HepG2 (cell line): ENCODE measurements at regions of chr15 and their contacts with region 1.

Region 1: DNA sequence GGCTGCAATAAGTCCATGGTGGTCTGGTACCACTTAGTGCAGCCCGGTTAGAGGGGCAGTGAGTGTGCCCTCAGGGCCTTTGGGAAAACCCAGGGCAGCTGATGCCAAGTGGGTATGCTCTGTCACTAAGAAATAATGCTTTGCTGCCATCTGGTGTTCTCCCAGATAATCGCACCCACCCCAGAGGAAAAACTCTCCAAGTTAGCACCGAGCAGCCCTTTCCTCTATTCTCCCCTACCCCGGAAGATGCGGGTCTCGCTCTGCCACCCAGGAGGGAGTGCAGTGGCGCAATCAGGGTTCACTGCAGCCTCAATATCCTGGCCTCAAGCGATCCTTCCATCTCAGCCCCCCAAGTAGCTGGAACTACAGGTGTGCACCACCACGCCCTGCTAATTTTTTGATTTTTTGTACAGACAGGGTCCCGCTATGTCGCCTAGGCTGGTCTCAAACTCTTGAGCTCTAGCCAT is 21.3 kb upstream of the DAPK2 start:
- DNase-seq: peak; percentile 60
- ATAC-seq: peak; percentile 89
- H3K4me3 ChIP-seq: no peak overlapping the region; a peak in 1 of 6 replicates
- H3K27ac ChIP-seq: no peak overlapping the region
- H3K4me1 ChIP-seq: peaks cover 44% of the 10 kb centered on the region
- H3K27me3 ChIP-seq: no peaks in the 10 kb centered on the region
- CTCF ChIP-seq: peak; percentile 88
- EP300 ChIP-seq: no peak
- POLR2A ChIP-seq: no peak
- RAD21 ChIP-seq: peak; percentile 89

Region 2: DNA sequence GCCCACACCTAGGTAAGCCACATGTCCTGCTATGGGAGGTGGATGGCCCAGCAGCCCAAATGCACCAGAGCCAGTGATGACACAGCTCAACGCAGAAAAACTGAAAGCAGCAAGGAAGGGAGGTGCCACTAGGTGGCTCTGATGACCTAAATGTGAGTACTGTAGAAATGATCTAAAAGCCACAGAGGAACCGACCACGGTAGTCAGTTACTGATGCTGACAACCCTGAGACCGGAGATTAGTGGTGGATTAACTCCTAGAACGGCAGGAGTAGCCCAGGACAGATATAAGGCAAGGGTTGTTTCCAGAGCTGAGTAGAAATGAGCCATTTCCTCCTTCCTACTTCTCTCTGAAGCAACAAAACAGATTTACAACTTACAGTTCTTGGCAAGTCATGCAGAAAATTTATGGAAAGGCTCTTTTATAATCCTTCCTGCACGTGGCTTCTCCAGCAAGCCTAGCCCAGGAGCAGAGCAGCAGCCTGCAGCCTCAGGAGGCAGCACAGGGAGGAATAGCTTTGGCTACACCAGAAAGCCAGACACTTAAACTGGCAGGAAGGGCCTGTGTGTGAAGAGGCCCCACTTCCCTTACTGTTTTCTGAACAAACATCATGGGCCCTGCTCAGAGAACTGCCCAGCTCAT is 457.3 kb before region 1 on chr15:
- CTCF ChIA-PET with region 1: interaction called, 4 read pairs
- POLR2A ChIA-PET with region 1: interaction called, 5 read pairs
- in situ Hi-C with region 1: loop called (anchors 5 kb)
- intact Hi-C with region 1: loop called (anchors 5 kb)
- DNase-seq: peak; percentile 77
- ATAC-seq: peak; percentile 94
- H3K4me3 ChIP-seq: no peak overlapping the region
- H3K27ac ChIP-seq: peak overlapping the region; percentile 27
- H3K4me1 ChIP-seq: peaks cover 21% of the 10 kb centered on the region
- H3K27me3 ChIP-seq: no peaks in the 10 kb centered on the region
- CTCF ChIP-seq: peak; percentile 90
- EP300 ChIP-seq: no peak
- POLR2A ChIP-seq: no peak
- RAD21 ChIP-seq: peak; percentile 60

Region 3: DNA sequence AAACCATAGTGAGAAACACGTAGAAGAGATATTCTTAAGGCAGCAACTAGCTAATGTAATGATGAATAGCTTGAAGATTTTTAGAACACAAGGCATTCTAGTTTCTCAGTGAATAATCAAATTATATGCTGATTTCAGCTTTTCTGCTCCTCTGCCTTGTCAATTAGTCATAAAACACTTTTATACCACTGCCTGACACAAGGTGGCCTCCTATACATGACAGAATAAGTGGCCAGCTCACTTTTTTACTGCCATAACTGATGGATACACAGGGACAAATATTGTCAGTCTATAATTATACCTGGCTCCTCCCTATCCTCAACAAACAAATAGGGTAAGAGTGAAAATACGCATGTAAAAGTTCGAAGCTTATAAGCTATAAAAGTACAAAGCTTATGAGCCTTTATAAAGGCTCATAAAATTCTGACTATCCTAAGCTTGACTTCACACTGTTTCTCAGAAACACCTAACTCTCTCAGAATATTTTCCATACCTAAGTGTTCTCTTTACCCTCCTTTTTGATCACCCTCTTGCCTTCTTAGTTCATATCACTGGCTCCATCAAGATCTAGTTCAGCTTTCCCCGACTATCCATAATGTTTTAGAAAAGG is 315.4 kb before region 1 on chr15:
- CTCF ChIA-PET with region 1: interaction called, 31 read pairs
- POLR2A ChIA-PET with region 1: interaction called, 3 read pairs
- in situ Hi-C with region 1: loop called (anchors 5 kb)
- intact Hi-C with region 1: loop called (anchors 1 kb)
- DNase-seq: peak; percentile 61
- ATAC-seq: peak; percentile 69
- H3K4me3 ChIP-seq: no peak overlapping the region
- H3K27ac ChIP-seq: no peak overlapping the region
- H3K4me1 ChIP-seq: no peaks in the 10 kb centered on the region
- H3K27me3 ChIP-seq: no peaks in the 10 kb centered on the region
- CTCF ChIP-seq: peak; percentile 74
- EP300 ChIP-seq: no peak
- POLR2A ChIP-seq: no peak
- RAD21 ChIP-seq: peak; percentile 63

Region 4: DNA sequence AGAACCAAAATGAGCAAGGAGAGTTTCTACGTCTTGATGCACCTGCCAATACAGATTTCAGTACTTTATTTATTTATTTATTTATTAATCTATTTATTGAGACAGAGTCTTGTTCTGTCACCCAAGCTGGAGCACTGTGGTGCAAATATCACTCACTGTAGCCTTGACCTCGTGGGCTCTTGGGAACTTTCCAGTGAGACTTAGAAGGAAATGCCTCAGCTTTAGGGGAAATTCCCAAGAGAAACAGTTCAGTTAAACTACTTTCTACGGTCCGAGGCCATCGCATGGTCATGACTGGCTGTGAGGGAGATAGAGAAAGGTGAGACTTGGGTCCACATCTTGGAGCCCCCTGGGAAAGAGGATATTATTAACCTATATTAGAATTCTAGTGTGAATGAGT is 186.9 kb before region 1 on chr15:
- CTCF ChIA-PET with region 1: no interaction called
- POLR2A ChIA-PET with region 1: no interaction called
- in situ Hi-C with region 1: no loop called
- intact Hi-C with region 1: no loop called
- DNase-seq: no peak
- ATAC-seq: no peak
- H3K4me3 ChIP-seq: no peak overlapping the region
- H3K27ac ChIP-seq: no peak overlapping the region
- H3K4me1 ChIP-seq: no peaks in the 10 kb centered on the region
- H3K27me3 ChIP-seq: peaks cover 2 to 9% of the 10 kb centered on the region in 2 experiments; a peak in 3 of 5 replicates
- CTCF ChIP-seq: no peak
- EP300 ChIP-seq: no peak
- POLR2A ChIP-seq: no peak
- RAD21 ChIP-seq: no peak

Region 5: GRCh38 chr15:63891079-63891767 is 176.4 kb before region 1 on chr15:
- CTCF ChIA-PET with region 1: interaction called, 5 read pairs
- POLR2A ChIA-PET with region 1: no interaction called
- in situ Hi-C with region 1: no loop called
- intact Hi-C with region 1: loop called (anchors 2 kb)
- DNase-seq: peak; percentile 73
- ATAC-seq: peak; percentile 93
- H3K4me3 ChIP-seq: no peak overlapping the region; a peak in 1 of 6 replicates
- H3K27ac ChIP-seq: no peak overlapping the region
- H3K4me1 ChIP-seq: peaks cover 6% of the 10 kb centered on the region
- H3K27me3 ChIP-seq: peaks cover 0 to 2% of the 10 kb centered on the region in 2 experiments; a peak in 1 of 5 replicates
- CTCF ChIP-seq: peak; percentile 93
- EP300 ChIP-seq: 0 out of 4 replicates have a peak, but pooled peaks of 1 of the 2 experiments have one; percentile 6
- POLR2A ChIP-seq: no peak
- RAD21 ChIP-seq: peak; percentile 82

Region 6: GRCh38 chr15:63945007-63945788 is 122.4 kb before region 1 on chr15:
- CTCF ChIA-PET with region 1: interaction called, 5 read pairs
- POLR2A ChIA-PET with region 1: no interaction called
- in situ Hi-C with region 1: no loop called
- intact Hi-C with region 1: loop called (anchors 5 kb)
- DNase-seq: peak; percentile 48
- ATAC-seq: peak; percentile 88
- H3K4me3 ChIP-seq: peak overlapping the region; percentile 34 to 68 (median 43)
- H3K27ac ChIP-seq: no peak overlapping the region
- H3K4me1 ChIP-seq: peaks cover 49% of the 10 kb centered on the region
- H3K27me3 ChIP-seq: no peaks in the 10 kb centered on the region
- CTCF ChIP-seq: peak; percentile 81
- EP300 ChIP-seq: no peak
- POLR2A ChIP-seq: no peak
- RAD21 ChIP-seq: peak; percentile 29; the same call in 1 of the 2 replicates